Right ventricle myocardium superior (tissue), 1 donor: ENCODE measurements at regions of chr18 and their contacts with region 1.

Region 1: DNA sequence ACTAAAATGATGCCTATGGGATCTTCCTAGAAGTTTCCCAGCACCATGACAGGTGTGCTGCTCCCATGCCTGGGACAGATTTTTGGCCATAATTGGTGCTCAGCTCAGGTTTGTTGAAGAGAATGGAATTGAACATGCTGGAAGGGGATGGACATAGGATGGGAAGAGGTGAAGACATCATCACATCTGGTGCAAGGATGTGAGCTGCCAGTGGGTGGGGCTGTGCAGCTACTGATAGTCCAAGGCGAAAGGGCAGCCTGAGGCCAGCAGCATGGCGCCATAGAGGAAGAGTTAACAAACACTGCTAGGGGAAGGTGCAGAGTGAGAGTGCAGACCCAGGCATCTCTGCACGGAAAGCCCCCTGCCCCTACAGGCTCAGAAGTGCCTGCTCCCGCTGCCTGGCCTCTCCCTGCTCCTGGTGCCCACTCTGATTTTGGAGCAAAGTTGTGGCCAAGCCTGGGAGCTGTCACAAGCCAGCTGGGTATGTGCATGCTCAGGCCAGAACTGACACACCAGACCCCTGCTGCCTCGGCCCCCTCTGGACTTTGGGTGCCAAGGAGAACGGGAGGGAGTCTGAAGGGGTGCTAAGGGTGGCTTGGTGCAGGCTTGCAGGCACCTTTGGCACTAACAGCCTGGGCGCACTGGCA is 178.6 kb downstream of the ZBTB7C start:
- DNase-seq: peak; percentile 78
- ATAC-seq: peak; percentile 55

Region 2: DNA sequence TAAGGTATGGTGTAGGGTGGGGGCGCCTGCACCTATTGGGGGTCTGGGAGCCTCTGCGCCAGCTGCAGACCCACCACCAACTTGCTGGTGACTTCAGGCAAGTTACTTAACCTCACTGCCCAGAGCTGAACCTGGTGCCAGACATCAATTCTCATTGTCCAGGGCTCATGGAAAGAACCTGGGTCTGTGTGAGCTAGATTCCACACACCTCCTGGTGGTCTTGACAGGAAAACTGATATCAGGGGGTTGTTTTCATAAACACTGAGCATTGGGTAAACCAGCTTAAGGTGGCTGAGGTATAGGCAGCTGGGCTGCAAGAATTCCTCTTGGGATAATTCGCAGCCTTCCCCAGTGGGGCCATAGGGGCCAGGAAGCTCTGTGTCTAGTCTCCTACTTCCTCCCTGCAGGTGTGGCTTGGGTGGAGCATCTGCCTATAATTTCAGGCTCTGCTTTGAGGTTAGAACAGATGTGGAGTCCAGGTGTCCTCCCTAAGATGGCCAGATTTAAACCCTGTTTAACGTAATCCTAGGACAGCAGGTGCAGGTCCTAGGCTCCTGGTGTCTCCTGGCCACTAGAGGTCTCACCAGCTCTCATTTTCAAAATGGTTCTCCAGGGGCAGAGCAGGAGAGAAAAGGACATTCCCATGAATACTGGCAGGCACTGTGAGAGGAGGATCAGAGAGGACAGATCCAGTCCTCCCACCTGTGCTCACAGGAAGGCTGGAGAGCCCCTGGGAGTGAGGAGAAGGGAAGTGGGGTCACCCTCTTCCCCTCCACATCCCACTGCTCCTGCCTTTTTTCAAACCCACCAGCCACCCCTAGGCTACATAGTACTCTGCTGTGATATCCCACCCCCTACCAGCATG is 199.7 kb before region 1 on chr18:
- intact Hi-C with region 1: no loop called
- DNase-seq: no peak
- ATAC-seq: peak; percentile 87

Region 3: GRCh38 chr18:48445540-48445939 is 214.9 kb after region 1 on chr18:
- intact Hi-C with region 1: loop called (anchors 5 kb)
- DNase-seq: peak; percentile 79
- ATAC-seq: peak; percentile 80